B cell (primary cell): ENCODE measurements at regions of chr12 and their contacts with region 1.

Region 1: GRCh38 chr12:108231109-108231905 is 102.2 kb downstream of the WSCD2 start:
- DNase-seq: no peak
- ATAC-seq: no peak
- H3K4me3 ChIP-seq: no peak overlapping the region
- H3K4me3 Mint-ChIP-seq: no peak overlapping the region
- H3K27ac ChIP-seq: no peak overlapping the region
- H3K27ac Mint-ChIP-seq: no peak overlapping the region
- H3K4me1 ChIP-seq: no peaks in the 10 kb centered on the region
- H3K4me1 Mint-ChIP-seq: no peaks in the 10 kb centered on the region
- H3K27me3 ChIP-seq: no peaks in the 10 kb centered on the region
- H3K27me3 Mint-ChIP-seq: peaks cover 19% of the 10 kb centered on the region
- CTCF ChIP-seq: no peak

Region 2: DNA sequence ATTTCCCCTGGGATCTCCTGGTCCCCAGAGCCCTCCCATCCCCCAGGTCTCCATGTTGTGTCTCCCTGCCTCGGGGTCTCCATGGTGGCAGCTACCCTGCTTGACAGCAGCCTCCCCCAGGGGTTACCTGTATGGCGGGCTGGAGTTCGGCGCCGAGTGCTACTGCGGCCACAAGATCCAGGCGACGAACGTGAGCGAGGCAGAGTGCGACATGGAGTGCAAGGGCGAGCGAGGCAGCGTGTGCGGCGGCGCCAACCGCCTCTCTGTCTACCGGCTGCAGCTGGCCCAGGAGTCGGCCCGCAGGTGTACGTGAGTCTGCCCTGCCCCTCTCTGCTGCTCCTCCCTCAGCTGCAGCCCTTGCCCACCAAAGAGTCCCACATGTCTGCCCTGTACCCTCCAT is 21.3 kb before region 1 on chr12:
- CTCF ChIA-PET with region 1: no interaction called
- POLR2A ChIA-PET with region 1: no interaction called
- intact Hi-C with region 1: loop called (anchors 1 kb)
- DNase-seq: no peak
- ATAC-seq: no peak
- H3K4me3 ChIP-seq: no peak overlapping the region
- H3K4me3 Mint-ChIP-seq: no peak overlapping the region
- H3K27ac ChIP-seq: no peak overlapping the region
- H3K27ac Mint-ChIP-seq: no peak overlapping the region
- H3K4me1 ChIP-seq: no peaks in the 10 kb centered on the region
- H3K4me1 Mint-ChIP-seq: no peaks in the 10 kb centered on the region
- H3K27me3 ChIP-seq: peaks cover 0 to 7% (median 0%) of the 10 kb centered on the region in 4 experiments
- H3K27me3 Mint-ChIP-seq: peaks cover 31% of the 10 kb centered on the region
- CTCF ChIP-seq: no peak